Endothelial cell of umbilical vein (primary cell): ENCODE measurements at regions of chr6 and their contacts with region 1.

Region 1: GRCh38 chr6:99425647-99426453 is 742 bp upstream of the PNISR start:
- DNase-seq: peak; percentile 83
- H3K4me3 ChIP-seq: peak overlapping the region; percentile 46 to 92 (median 91)
- H3K27ac ChIP-seq: peak overlapping the region; percentile 94
- H3K4me1 ChIP-seq: peaks cover 26% of the 10 kb centered on the region
- H3K27me3 ChIP-seq: no peaks in the 10 kb centered on the region
- CTCF ChIP-seq: peak; percentile 20 to 35
- POLR2A ChIP-seq: no peak

Region 2: DNA sequence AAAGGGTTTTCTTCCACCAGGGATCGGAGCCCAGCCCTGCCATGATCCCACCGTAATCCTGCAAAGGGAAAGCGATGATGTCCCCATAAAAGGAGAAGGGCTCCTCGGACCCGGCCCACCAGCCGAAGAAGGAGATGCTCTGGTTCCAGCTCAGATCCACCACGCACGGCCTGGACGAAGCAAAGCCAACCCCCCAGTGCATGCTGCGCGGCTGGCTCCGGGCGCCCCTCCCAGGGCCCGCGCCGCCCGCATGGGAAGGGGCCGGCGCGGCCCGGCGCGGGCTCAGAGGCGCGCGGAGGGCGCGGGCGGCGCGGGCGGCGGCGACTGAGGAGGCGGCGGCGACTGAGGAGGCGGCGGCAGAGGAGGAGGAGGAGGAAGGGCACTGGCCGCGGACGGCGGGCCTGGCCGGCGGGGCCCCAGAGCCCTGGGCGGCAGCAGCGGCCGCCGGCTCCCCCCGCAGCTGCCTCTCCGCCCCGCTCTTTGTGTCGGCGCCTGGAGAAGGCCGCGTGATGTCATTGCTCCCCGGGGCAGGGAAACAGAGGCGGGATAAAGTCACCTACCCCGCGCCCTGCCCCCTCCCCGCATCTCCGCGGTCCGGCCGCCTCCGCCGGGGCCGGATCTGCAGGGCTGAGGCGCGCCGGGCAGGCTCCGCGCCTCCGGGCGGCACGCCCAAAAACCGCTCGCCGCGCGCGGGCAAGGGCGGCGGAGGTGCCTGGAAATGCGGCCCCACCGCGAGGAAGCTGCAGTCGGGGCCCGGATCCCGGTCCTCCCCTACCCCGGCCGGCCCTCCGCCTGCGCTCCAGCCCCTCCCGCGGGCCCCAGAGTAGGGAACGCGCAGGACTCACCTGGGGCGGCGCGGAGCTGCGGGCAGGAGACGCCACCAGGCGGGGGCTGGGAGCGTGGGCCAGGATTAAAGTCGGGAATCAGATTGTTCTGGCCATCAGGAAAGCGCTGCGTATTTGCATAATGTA is 76.4 kb before region 1 on chr6 and contains the start of gene FAXC:
- CTCF ChIA-PET with region 1: no interaction called
- POLR2A ChIA-PET with region 1: no interaction called
- dilution Hi-C with region 1: no loop called
- intact Hi-C with region 1: loop called (anchors 2 kb)
- DNase-seq: peak; percentile 25
- H3K4me3 ChIP-seq: peak within 1 kb of the TSS; percentile 57 to 60 (median 58)
- H3K27ac ChIP-seq: no peak within 1 kb of the TSS
- H3K4me1 ChIP-seq: peaks cover 15% of the 10 kb centered on the region
- H3K27me3 ChIP-seq: peaks cover 8 to 11% of the 10 kb centered on the region in 2 experiments
- CTCF ChIP-seq: no peak
- POLR2A ChIP-seq: no peak
- total RNA-seq, gene FAXC: 3.6 and 8.4 TPM in 2 replicates

Region 3: GRCh38 chr6:99393698-99394531 is 31.9 kb before region 1 on chr6 and contains the start of gene COQ3:
- CTCF ChIA-PET with region 1: interaction called, 10 read pairs
- POLR2A ChIA-PET with region 1: interaction called, 3 read pairs
- dilution Hi-C with region 1: no loop called
- intact Hi-C with region 1: loop called (anchors 1 kb)
- DNase-seq: peak; percentile 85
- H3K4me3 ChIP-seq: peak within 1 kb of the TSS; percentile 59 to 98 (median 84)
- H3K27ac ChIP-seq: peak within 1 kb of the TSS; percentile 81
- H3K4me1 ChIP-seq: peaks cover 5% of the 10 kb centered on the region
- H3K27me3 ChIP-seq: no peaks in the 10 kb centered on the region
- CTCF ChIP-seq: no peak
- POLR2A ChIP-seq: peak; percentile 73
- total RNA-seq, gene COQ3: 7.5 and 9.1 TPM in 2 replicates

Region 4: DNA sequence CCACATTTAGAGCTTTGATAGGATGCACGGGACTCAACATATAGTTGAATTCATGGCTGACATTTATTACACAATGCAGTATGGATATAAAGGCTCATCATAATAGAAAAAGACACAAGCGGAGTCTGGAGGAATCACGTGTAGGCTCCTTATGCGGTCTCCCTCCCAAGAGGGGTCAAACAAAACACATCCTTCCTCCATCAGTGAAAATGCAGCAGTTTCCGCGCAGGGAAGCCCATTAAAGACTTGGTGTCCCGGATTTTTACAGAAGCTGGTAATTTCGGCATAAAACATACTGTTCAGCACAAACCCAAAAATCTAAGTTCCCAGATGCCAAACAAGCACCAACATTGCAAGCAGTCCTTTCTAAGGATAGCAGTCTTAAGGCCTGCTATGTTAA is 88.2 kb after region 1 on chr6:
- CTCF ChIA-PET with region 1: no interaction called
- POLR2A ChIA-PET with region 1: no interaction called
- dilution Hi-C with region 1: no loop called
- intact Hi-C with region 1: loop called (anchors 1 kb)
- DNase-seq: peak; percentile 36
- H3K4me3 ChIP-seq: peak overlapping the region; percentile 17 to 86 (median 76)
- H3K27ac ChIP-seq: no peak overlapping the region
- H3K4me1 ChIP-seq: peaks cover 13% of the 10 kb centered on the region
- H3K27me3 ChIP-seq: no peaks in the 10 kb centered on the region
- CTCF ChIP-seq: no peak
- POLR2A ChIP-seq: no peak